Naive thymus-derived CD4-positive, alpha-beta T cell (primary cell): ENCODE measurements at regions of chr9 and their contacts with region 1.

Region 1: DNA sequence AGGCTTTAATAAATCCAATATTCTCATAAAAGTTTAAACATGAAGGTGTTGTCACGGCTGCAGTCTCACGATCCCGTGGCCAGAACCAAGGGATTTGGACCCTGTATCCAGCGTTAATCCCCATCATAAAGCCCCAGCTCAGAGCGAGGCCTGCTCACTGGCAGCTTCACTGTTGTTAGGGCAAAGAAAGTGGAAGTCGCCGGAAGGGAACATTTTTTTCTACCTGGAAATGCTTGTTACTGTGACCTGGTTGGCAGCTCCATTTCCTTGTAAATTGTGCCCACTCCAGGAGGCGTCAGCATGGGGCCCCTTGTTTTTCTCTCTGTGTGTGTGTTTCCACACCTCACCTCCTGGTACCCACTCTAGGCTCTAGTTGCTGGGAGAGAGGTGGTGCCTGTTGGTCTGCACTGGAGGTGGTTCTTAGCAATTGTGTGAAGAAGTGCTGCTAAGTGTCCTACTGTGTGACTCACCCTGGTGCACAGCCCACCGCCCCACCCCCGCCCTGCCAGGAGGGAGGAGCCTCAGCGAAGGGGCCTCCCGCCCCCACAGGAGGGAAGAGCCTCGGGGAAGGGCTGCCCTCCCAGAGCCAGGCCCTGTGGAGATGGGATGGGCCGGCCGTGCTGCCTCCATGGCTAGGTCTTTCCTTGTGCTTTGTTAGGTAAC is 105.1 kb downstream of the EHMT1 start:
- DNase-seq: peak in 4 of 9 donors; percentile 11 to 30 (median 20)
- ATAC-seq: no peak
- H3K4me3 ChIP-seq: peak overlapping the region; percentile 14
- H3K4me3 Mint-ChIP-seq: peak overlapping the region; percentile 59 to 84 (median 72)
- H3K27ac ChIP-seq: peak overlapping the region; percentile 55
- H3K27ac Mint-ChIP-seq: peak overlapping the region; percentile 82 to 98 (median 95)
- H3K4me1 ChIP-seq: peaks cover 26 to 44% of the 10 kb centered on the region in 2 donors
- H3K4me1 Mint-ChIP-seq: peaks cover 34 to 72% (median 68%) of the 10 kb centered on the region in 7 donors
- H3K27me3 ChIP-seq: no peaks in the 10 kb centered on the region
- H3K27me3 Mint-ChIP-seq: no peaks in the 10 kb centered on the region

Region 2: GRCh38 chr9:137672907-137673791 is 50.8 kb before region 1 on chr9:
- CTCF ChIA-PET with region 1: interaction called, 8 read pairs
- POLR2A ChIA-PET with region 1: no interaction called
- intact Hi-C with region 1: loop called in 1 of 2 experiments (anchors 2 kb)
- DNase-seq: peak in 7 of 9 donors; percentile 34 to 70 (median 59)
- ATAC-seq: peak; percentile 88
- H3K4me3 ChIP-seq: no peak overlapping the region
- H3K4me3 Mint-ChIP-seq: peak overlapping the region in 2 of 10 donors; percentile 29 to 37
- H3K27ac ChIP-seq: no peak overlapping the region
- H3K27ac Mint-ChIP-seq: peak overlapping the region in 5 of 9 donors; percentile 11 to 73 (median 28)
- H3K4me1 ChIP-seq: peaks cover 9 to 13% of the 10 kb centered on the region in 2 donors
- H3K4me1 Mint-ChIP-seq: peaks cover 29 to 68% (median 58%) of the 10 kb centered on the region in 7 donors
- H3K27me3 ChIP-seq: no peaks in the 10 kb centered on the region
- H3K27me3 Mint-ChIP-seq: no peaks in the 10 kb centered on the region

Region 3: GRCh38 chr9:137708590-137709284 is 15.2 kb before region 1 on chr9:
- CTCF ChIA-PET with region 1: no interaction called
- POLR2A ChIA-PET with region 1: interaction called, 11 read pairs
- intact Hi-C with region 1: no loop called
- DNase-seq: no peak
- ATAC-seq: no peak
- H3K4me3 ChIP-seq: no peak overlapping the region
- H3K4me3 Mint-ChIP-seq: no peak overlapping the region
- H3K27ac ChIP-seq: no peak overlapping the region
- H3K27ac Mint-ChIP-seq: peak overlapping the region in 1 of 9 donors; percentile 17
- H3K4me1 ChIP-seq: peaks cover 19 to 30% of the 10 kb centered on the region in 2 donors
- H3K4me1 Mint-ChIP-seq: peaks cover 35 to 64% (median 60%) of the 10 kb centered on the region in 7 donors
- H3K27me3 ChIP-seq: no peaks in the 10 kb centered on the region
- H3K27me3 Mint-ChIP-seq: no peaks in the 10 kb centered on the region

Region 4: DNA sequence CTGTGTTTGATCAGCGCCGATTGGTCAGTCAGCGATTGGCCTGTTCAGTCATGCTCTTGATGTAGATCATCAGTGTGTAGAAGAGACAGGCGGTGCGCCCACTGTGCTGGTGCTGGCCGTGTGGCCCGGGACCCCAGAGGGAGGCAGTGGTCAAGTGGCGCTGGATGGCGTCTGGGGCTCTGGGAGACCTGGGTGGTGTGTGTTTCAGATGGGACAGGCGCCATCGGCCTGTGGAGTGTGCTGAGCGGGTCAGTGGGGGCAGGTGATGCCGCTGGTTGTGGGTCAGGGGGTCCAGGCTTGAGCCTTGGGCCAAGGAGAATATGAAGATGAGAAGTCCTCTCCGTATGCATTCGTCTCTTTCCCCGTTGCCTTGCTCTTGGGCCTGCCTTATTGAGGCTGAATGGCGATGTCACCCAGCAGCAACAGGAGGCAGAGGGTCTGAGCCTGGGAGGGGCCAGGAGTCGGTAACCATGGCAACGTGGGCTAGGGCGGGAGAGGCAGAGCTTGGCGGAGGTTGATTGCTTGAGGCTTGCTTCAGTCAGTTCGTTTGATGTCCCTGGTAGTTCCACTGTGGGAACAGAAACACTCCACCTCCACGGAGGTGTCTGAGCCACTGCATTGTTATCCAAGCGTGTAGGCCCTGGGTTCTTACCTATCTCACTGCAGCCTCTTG is 35.9 kb after region 1 on chr9:
- CTCF ChIA-PET with region 1: interaction called, 10 read pairs
- POLR2A ChIA-PET with region 1: no interaction called
- intact Hi-C with region 1: no loop called
- DNase-seq: no peak
- ATAC-seq: no peak
- H3K4me3 ChIP-seq: no peak overlapping the region
- H3K4me3 Mint-ChIP-seq: no peak overlapping the region
- H3K27ac ChIP-seq: no peak overlapping the region
- H3K27ac Mint-ChIP-seq: peak overlapping the region in 6 of 9 donors; percentile 26 to 78 (median 60)
- H3K4me1 ChIP-seq: peaks cover 0 to 16% of the 10 kb centered on the region in 2 donors
- H3K4me1 Mint-ChIP-seq: peaks cover 6 to 44% (median 22%) of the 10 kb centered on the region in 7 donors
- H3K27me3 ChIP-seq: no peaks in the 10 kb centered on the region
- H3K27me3 Mint-ChIP-seq: no peaks in the 10 kb centered on the region

Region 5: GRCh38 chr9:137772281-137772873 is 48.5 kb after region 1 on chr9:
- CTCF ChIA-PET with region 1: interaction called, 3 read pairs
- POLR2A ChIA-PET with region 1: no interaction called
- intact Hi-C with region 1: loop called in 1 of 2 experiments (anchors 5 kb)
- DNase-seq: no peak
- ATAC-seq: no peak
- H3K4me3 ChIP-seq: no peak overlapping the region
- H3K4me3 Mint-ChIP-seq: no peak overlapping the region
- H3K27ac ChIP-seq: no peak overlapping the region
- H3K27ac Mint-ChIP-seq: peak overlapping the region in 2 of 9 donors; percentile 32 to 42
- H3K4me1 ChIP-seq: no peaks in the 10 kb centered on the region
- H3K4me1 Mint-ChIP-seq: peaks cover 0 to 18% (median 11%) of the 10 kb centered on the region in 7 donors
- H3K27me3 ChIP-seq: no peaks in the 10 kb centered on the region
- H3K27me3 Mint-ChIP-seq: no peaks in the 10 kb centered on the region

Region 6: GRCh38 chr9:137856804-137857203 is 132.9 kb after region 1 on chr9:
- CTCF ChIA-PET with region 1: no interaction called
- POLR2A ChIA-PET with region 1: no interaction called
- intact Hi-C with region 1: no loop called
- DNase-seq: no peak
- ATAC-seq: no peak
- H3K4me3 ChIP-seq: no peak overlapping the region
- H3K4me3 Mint-ChIP-seq: no peak overlapping the region
- H3K27ac ChIP-seq: no peak overlapping the region
- H3K27ac Mint-ChIP-seq: no peak overlapping the region
- H3K4me1 ChIP-seq: no peaks in the 10 kb centered on the region
- H3K4me1 Mint-ChIP-seq: peaks cover 0 to 4% (median 0%) of the 10 kb centered on the region in 7 donors
- H3K27me3 ChIP-seq: no peaks in the 10 kb centered on the region
- H3K27me3 Mint-ChIP-seq: peaks cover 0 to 6% (median under 1%) of the 10 kb centered on the region in 5 donors

Region 7: DNA sequence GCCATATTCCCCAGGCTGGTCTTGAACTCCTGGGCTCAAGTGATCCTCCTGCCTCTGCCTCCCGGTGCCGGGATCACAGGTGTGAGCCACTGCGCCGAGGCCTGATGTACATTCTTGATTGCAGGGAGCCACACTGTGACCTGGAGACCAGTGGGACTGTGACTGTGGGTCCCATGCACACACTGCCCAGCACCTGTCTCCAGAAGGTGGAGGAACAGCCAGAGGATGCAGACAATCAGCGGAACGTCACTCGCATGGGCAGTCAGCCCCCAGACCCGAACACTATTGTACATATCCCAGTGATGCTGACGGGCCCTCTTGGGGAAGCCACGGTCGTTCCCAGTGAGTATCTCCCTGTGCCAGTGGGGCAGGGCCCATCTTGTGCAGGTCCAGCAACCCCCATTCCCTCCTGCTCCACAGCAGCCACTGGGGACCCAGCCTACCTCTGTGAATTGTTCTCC is 300.9 kb after region 1 on chr9:
- CTCF ChIA-PET with region 1: no interaction called
- POLR2A ChIA-PET with region 1: no interaction called
- intact Hi-C with region 1: loop called in 1 of 2 experiments (anchors 5 kb)
- DNase-seq: peak in 1 of 9 donors; percentile 8
- ATAC-seq: no peak
- H3K4me3 ChIP-seq: no peak overlapping the region
- H3K4me3 Mint-ChIP-seq: peak overlapping the region in 1 of 10 donors; percentile 45
- H3K27ac ChIP-seq: no peak overlapping the region
- H3K27ac Mint-ChIP-seq: no peak overlapping the region
- H3K4me1 ChIP-seq: no peaks in the 10 kb centered on the region
- H3K4me1 Mint-ChIP-seq: peaks cover 0 to 6% (median 0%) of the 10 kb centered on the region in 7 donors
- H3K27me3 ChIP-seq: no peaks in the 10 kb centered on the region
- H3K27me3 Mint-ChIP-seq: peaks cover 29 to 44% (median 33%) of the 10 kb centered on the region in 5 donors